CD8-positive, alpha-beta memory T cell (primary cell): ENCODE measurements at regions of chr5 and their contacts with region 1.

Region 1: GRCh38 chr5:14595189-14595588 is 13.6 kb downstream of the OTULINL start:
- DNase-seq: peak in 4 of 5 donors; percentile 6 to 62 (median 53)
- H3K4me3 ChIP-seq: peak overlapping the region; percentile 51
- H3K4me3 Mint-ChIP-seq: peak overlapping the region; percentile 73 to 84 (median 82)
- H3K27ac ChIP-seq: peak overlapping the region; percentile 38
- H3K27ac Mint-ChIP-seq: peak overlapping the region; percentile 91 to 99 (median 95)
- H3K4me1 ChIP-seq: peaks cover 77% of the 10 kb centered on the region
- H3K4me1 Mint-ChIP-seq: peaks cover 85 to 92% (median 89%) of the 10 kb centered on the region in 3 donors
- H3K27me3 ChIP-seq: no peaks in the 10 kb centered on the region
- H3K27me3 Mint-ChIP-seq: no peaks in the 10 kb centered on the region

Region 2: GRCh38 chr5:14581333-14581890 is 13.8 kb before region 1 on chr5 and contains the start of gene OTULINL:
- CTCF ChIA-PET with region 1: interaction called, 37 read pairs
- POLR2A ChIA-PET with region 1: interaction called, 48 read pairs
- DNase-seq: peak; percentile 81 to 91 (median 83)
- H3K4me3 ChIP-seq: peak within 1 kb of the TSS; percentile 60
- H3K4me3 Mint-ChIP-seq: peak within 1 kb of the TSS; percentile 86 to 97 (median 88)
- H3K27ac ChIP-seq: peak within 1 kb of the TSS; percentile 71
- H3K27ac Mint-ChIP-seq: peak within 1 kb of the TSS; percentile 85 to 97 (median 95)
- H3K4me1 ChIP-seq: peaks cover 13% of the 10 kb centered on the region
- H3K4me1 Mint-ChIP-seq: peaks cover 39 to 51% (median 50%) of the 10 kb centered on the region in 3 donors
- H3K27me3 ChIP-seq: no peaks in the 10 kb centered on the region
- H3K27me3 Mint-ChIP-seq: peaks cover 0 to 9% of the 10 kb centered on the region in 2 donors
- total RNA-seq, gene OTULINL: 15.4 to 19.6 TPM